ENCODE measurements at regions of chr17 and their contacts with region 1.

Region 1: DNA sequence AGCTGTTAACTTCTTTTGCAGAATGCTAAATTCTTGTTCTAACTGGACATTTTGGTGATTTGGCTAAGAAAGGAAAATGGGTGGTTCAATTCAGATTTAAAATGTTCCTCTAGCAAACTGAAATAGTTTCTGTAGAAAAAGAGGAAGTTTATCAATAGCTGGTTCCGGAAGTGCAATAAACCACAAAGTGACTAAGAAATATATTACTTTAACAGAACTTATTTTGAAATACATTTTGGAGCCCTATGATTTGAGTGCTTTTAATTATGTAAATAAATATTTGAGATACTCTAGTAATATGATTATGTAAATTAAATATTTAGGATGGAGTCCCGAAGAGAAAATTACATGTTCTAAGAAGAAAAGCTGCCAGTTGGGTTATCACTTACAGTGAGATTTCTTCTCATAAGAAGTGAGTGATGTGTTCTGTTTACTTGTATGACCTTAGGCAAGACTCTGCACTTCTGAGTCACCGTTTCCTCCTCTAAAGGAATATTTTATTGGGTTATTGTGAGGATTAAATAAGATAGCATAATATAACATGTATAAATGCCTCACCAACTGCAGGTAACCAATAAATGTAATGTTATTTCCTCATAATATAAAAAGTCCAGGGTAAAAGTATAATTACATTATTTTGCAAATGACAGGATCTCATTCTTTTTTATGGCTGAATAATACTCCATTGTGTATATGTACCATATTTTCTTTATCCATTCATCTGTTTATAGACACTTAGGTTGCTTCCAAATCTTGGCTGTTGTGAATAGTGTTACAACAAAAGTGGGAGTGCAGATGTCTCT is at the start of gene EVI2B:
- DNase-seq: peak; percentile 59 to 75 (median 62)
- H3K4me3 ChIP-seq: peak within 1 kb of the TSS; percentile 59 to 60
- H3K4me3 Mint-ChIP-seq: peak within 1 kb of the TSS; percentile 88 to 97 (median 94)
- H3K27ac ChIP-seq: peak within 1 kb of the TSS; percentile 66
- H3K27ac Mint-ChIP-seq: peak within 1 kb of the TSS; percentile 88 to 97 (median 90)
- H3K4me1 ChIP-seq: peaks cover 49% of the 10 kb centered on the region
- H3K4me1 Mint-ChIP-seq: peaks cover 23 to 70% (median 36%) of the 10 kb centered on the region in 4 donors
- H3K27me3 ChIP-seq: no peaks in the 10 kb centered on the region
- H3K27me3 Mint-ChIP-seq: no peaks in the 10 kb centered on the region
- total RNA-seq, gene EVI2B: 174 to 176 TPM

Region 2: DNA sequence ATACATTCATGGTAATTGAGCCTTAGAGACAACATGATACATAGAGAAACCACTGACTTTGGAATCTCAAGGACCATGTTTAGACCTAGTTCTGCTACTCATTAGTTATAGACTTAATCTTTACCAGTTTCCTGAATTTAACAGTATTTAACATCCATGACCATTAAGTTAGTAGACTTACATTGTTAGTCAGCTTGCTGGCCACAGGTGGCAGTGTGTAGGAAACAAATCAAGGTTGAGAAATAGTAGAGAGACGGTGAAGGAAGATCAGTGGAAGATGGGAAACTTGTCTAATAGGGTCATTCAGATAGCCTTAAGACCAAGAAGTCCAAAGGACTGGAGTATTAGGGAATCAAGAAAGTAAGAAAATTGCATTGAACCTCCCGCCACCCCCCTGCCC is 48.1 kb before region 1 on chr17:
- CTCF ChIA-PET with region 1: interaction called, 3 read pairs
- POLR2A ChIA-PET with region 1: interaction called, 8 read pairs
- intact Hi-C with region 1: loop called (anchors 2 kb)
- DNase-seq: peak in 4 of 5 donors; percentile 3 to 19 (median 12)
- H3K4me3 ChIP-seq: no peak overlapping the region
- H3K4me3 Mint-ChIP-seq: no peak overlapping the region
- H3K27ac ChIP-seq: no peak overlapping the region
- H3K27ac Mint-ChIP-seq: peak overlapping the region in 1 of 7 donors; percentile 26
- H3K4me1 ChIP-seq: no peaks in the 10 kb centered on the region
- H3K4me1 Mint-ChIP-seq: peaks cover 0 to 3% (median under 1%) of the 10 kb centered on the region in 4 donors
- H3K27me3 ChIP-seq: no peaks in the 10 kb centered on the region
- H3K27me3 Mint-ChIP-seq: no peaks in the 10 kb centered on the region

Region 3: DNA sequence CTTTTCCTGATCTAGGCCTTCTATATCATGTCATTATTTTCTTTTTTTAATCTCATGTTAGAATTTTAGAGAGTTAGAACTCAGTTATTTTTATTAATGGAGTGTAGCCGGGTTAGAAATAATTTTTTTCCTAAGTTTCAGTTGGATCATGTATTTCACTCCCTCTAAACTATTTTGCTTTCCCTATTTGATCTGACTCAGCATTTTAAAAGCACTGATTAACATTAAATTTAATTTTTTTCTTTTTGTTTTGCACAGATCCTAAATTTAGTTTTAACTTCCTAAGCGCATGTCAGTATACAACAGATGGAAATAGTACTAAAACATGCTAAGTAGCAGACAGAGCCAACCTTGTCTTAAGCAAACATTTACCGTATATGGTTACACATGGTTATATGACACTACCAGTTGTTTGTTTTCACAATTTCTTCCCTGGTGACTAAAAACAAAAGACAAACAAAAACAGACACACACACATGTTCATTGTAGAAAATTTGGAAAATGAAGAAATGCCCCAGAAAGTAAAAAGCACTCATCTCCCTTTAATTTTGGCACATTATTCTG is 43.7 kb after region 1 on chr17:
- CTCF ChIA-PET with region 1: no interaction called
- POLR2A ChIA-PET with region 1: interaction called, 5 read pairs
- intact Hi-C with region 1: loop called (anchors 5 kb)
- DNase-seq: no peak
- H3K4me3 ChIP-seq: no peak overlapping the region
- H3K4me3 Mint-ChIP-seq: no peak overlapping the region
- H3K27ac ChIP-seq: no peak overlapping the region
- H3K27ac Mint-ChIP-seq: no peak overlapping the region
- H3K4me1 ChIP-seq: no peaks in the 10 kb centered on the region
- H3K4me1 Mint-ChIP-seq: no peaks in the 10 kb centered on the region
- H3K27me3 ChIP-seq: no peaks in the 10 kb centered on the region
- H3K27me3 Mint-ChIP-seq: no peaks in the 10 kb centered on the region

Region 4: DNA sequence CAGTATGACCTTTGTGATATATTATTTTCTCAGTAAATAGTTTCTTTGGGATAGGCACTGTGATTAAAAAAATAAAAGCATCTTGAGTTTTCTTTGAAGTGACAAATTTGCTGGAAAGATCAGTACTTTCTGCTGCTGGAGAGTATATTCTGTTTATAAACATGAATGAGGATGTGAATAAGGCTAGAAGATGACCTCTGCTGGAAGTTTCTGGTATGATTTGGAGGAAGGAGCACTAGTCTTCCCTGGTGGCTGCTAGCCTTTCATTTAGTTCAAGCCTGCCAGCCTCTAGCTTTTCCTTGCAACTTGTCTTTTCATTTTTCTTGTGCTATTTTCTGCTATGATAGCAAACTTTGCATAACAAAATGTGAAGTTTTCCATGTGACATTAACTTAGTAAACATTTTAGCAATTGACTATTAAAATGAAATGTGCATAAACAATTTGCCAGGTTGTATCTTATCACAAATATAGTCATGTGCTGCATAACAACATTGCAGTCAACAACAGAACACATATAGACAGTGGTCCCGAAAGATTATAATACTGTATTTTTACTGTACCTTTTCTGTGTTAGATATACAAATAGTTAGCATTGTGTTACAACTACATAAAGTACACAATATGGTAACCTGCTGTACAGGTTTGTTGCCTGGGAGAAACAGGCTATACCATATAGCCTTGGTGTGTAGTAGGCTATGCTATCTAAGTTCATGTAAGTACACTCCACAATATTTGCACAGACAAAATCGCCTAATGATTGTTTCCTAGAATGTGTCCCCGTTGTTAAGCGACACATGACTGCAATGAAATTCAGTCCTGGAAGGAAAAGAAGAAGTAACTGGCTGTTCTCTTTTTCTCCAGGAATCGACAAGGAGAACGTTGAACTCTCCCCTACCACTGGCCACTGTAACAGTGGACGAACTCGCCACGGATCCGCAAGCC is 59.2 kb after region 1 on chr17:
- CTCF ChIA-PET with region 1: interaction called, 6 read pairs
- POLR2A ChIA-PET with region 1: interaction called, 10 read pairs
- intact Hi-C with region 1: loop called (anchors 5 kb)
- DNase-seq: peak in 4 of 5 donors; percentile 60 to 67 (median 63)
- H3K4me3 ChIP-seq: no peak overlapping the region
- H3K4me3 Mint-ChIP-seq: peak overlapping the region in 1 of 8 donors; percentile 1
- H3K27ac ChIP-seq: no peak overlapping the region
- H3K27ac Mint-ChIP-seq: peak overlapping the region in 1 of 7 donors; percentile 29
- H3K4me1 ChIP-seq: peaks cover 9% of the 10 kb centered on the region
- H3K4me1 Mint-ChIP-seq: peaks cover 11 to 27% (median 20%) of the 10 kb centered on the region in 4 donors
- H3K27me3 ChIP-seq: no peaks in the 10 kb centered on the region
- H3K27me3 Mint-ChIP-seq: no peaks in the 10 kb centered on the region

Region 5: GRCh38 chr17:31549525-31550388 is 235.6 kb after region 1 on chr17:
- CTCF ChIA-PET with region 1: no interaction called
- POLR2A ChIA-PET with region 1: interaction called, 3 read pairs
- intact Hi-C with region 1: loop called (anchors 5 kb)
- DNase-seq: peak; percentile 83 to 87 (median 85)
- H3K4me3 ChIP-seq: peak overlapping the region; percentile 47 to 81
- H3K4me3 Mint-ChIP-seq: peak overlapping the region; percentile 83 to 91 (median 90)
- H3K27ac ChIP-seq: peak overlapping the region; percentile 62
- H3K27ac Mint-ChIP-seq: peak overlapping the region; percentile 23 to 91 (median 84)
- H3K4me1 ChIP-seq: peaks cover 7% of the 10 kb centered on the region
- H3K4me1 Mint-ChIP-seq: peaks cover 10 to 39% (median 14%) of the 10 kb centered on the region in 4 donors
- H3K27me3 ChIP-seq: no peaks in the 10 kb centered on the region
- H3K27me3 Mint-ChIP-seq: no peaks in the 10 kb centered on the region

Region 6: DNA sequence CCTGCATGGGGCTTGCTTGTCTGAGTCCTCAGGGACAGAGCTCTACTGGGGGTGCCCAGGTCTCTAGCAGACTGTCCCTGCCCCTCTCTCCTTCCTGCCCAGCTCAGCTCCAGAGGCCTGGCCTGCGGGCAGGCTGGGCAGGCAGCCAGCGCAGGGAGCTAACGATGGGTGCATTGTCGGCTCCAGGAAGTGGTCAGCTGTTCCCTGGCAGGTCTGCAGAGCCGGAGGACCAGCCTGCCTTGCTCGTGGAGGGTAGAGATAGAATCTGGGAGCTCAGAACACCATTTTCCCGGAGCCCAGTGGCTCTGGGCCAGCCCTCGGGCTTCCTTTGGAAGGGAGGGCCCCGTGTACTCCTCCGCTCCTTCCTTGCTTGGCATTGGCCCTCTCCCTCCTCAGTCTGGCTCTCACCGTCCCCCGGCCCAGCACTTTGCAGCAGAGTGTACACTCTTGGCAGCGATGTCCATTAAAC is 266.9 kb after region 1 on chr17:
- CTCF ChIA-PET with region 1: no interaction called
- POLR2A ChIA-PET with region 1: no interaction called
- intact Hi-C with region 1: no loop called
- DNase-seq: no peak
- H3K4me3 ChIP-seq: no peak overlapping the region
- H3K4me3 Mint-ChIP-seq: no peak overlapping the region
- H3K27ac ChIP-seq: no peak overlapping the region
- H3K27ac Mint-ChIP-seq: no peak overlapping the region
- H3K4me1 ChIP-seq: no peaks in the 10 kb centered on the region
- H3K4me1 Mint-ChIP-seq: peaks cover 0 to 5% (median 0%) of the 10 kb centered on the region in 4 donors
- H3K27me3 ChIP-seq: no peaks in the 10 kb centered on the region
- H3K27me3 Mint-ChIP-seq: peaks cover 0 to 4% of the 10 kb centered on the region in 2 donors

Measured in CD4-positive, alpha-beta memory T cell (primary cell).